ENCODE measurements at regions of chr1 and their contacts with region 1.

Region 1: GRCh38 chr1:10856863-10857598 is 60.6 kb upstream of the CASZ1 start:
- DNase-seq: peak; percentile 50 to 72
- ATAC-seq: peak; percentile 54 to 64
- H3K4me3 ChIP-seq: peak overlapping the region; percentile 2 to 35 (median 16)
- H3K27ac ChIP-seq: peak overlapping the region; percentile 91 to 99 (median 93)
- H3K4me1 ChIP-seq: peaks cover 55 to 57% of the 10 kb centered on the region in 2 donors
- H3K27me3 ChIP-seq: no peaks in the 10 kb centered on the region
- CTCF ChIP-seq: no peak
- POLR2A ChIP-seq: peak; percentile 45 to 49

Region 2: GRCh38 chr1:10745886-10746455 is 111.1 kb before region 1 on chr1:
- in situ Hi-C with region 1: no loop called
- intact Hi-C with region 1: loop called (anchors 2 kb)
- DNase-seq: peak; percentile 93 to 98
- ATAC-seq: peak; percentile 90 to 92
- H3K4me3 ChIP-seq: peak overlapping the region; percentile 22 to 42 (median 34)
- H3K27ac ChIP-seq: peak overlapping the region; percentile 95 to 97 (median 96)
- H3K4me1 ChIP-seq: peaks cover 40 to 55% of the 10 kb centered on the region in 2 donors
- H3K27me3 ChIP-seq: no peaks in the 10 kb centered on the region
- CTCF ChIP-seq: peak in 1 of 5 experiments; percentile 15
- POLR2A ChIP-seq: peak; percentile 66 to 70

Region 3: GRCh38 chr1:11227106-11228077 is 370.4 kb after region 1 on chr1:
- in situ Hi-C with region 1: no loop called
- intact Hi-C with region 1: no loop called
- DNase-seq: no peak
- ATAC-seq: no peak
- H3K4me3 ChIP-seq: no peak overlapping the region
- H3K27ac ChIP-seq: no peak overlapping the region
- H3K4me1 ChIP-seq: no peaks in the 10 kb centered on the region
- H3K27me3 ChIP-seq: no peaks in the 10 kb centered on the region
- CTCF ChIP-seq: no peak
- POLR2A ChIP-seq: no peak

Measured in gastrocnemius medialis (tissue), 4 donors.